Heart left ventricle (tissue), 16 donors: ENCODE measurements at regions of chr6 and their contacts with region 1.

Region 1: GRCh38 chr6:35240840-35241801 is 18.4 kb upstream of the ZNF76 start:
- DNase-seq: peak; percentile 63 to 84 (median 67)
- ATAC-seq: peak; percentile 11 to 41 (median 23)
- H3K4me3 ChIP-seq: no peak overlapping the region
- H3K27ac ChIP-seq: peak overlapping the region in 1 of 12 donors; percentile 19
- H3K4me1 ChIP-seq: peaks cover 0 to 52% (median 24%) of the 10 kb centered on the region in 12 donors
- H3K27me3 ChIP-seq: no peaks in the 10 kb centered on the region
- CTCF ChIP-seq: peak; percentile 93 to 98 (median 94)
- POLR2A ChIP-seq: no peak

Region 2: GRCh38 chr6:34887753-34888513 is 353.2 kb before region 1 on chr6 and contains the start of gene TAF11:
- intact Hi-C with region 1: loop called in 1 of 10 experiments (anchors 10 kb)
- DNase-seq: peak; percentile 94 to 96 (median 95)
- ATAC-seq: peak; percentile 91 to 96 (median 94)
- H3K4me3 ChIP-seq: peak within 1 kb of the TSS; percentile 65 to 95 (median 83)
- H3K27ac ChIP-seq: peak within 1 kb of the TSS; percentile 11 to 93 (median 80)
- H3K4me1 ChIP-seq: peaks cover 0 to 55% (median 24%) of the 10 kb centered on the region in 12 donors
- H3K27me3 ChIP-seq: no peaks in the 10 kb centered on the region
- CTCF ChIP-seq: no peak
- POLR2A ChIP-seq: peak in 1 of 2 donors; percentile 67
- total RNA-seq, gene TAF11: 14.6 to 25.9 (median 19.9) TPM

Region 3: DNA sequence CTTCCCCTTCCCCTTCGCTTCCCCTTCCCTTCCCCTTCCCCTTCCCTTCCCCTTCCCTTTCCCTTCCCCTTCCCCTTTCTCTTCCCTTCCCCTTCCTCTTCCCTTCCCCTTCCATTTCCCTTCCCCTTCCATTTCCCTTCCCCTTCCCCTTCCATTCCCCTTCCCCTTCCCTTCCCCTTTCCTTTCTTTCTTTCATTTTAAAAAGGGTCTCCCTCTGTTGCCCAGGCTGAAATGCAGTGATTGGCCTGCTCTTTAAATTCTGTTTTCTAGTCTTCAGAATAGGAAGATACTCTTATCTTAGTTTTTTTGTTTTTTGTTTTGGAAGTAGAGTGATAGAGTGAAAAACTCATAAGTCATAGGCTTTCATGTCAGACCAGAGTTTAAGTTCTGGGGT is 266.9 kb before region 1 on chr6:
- intact Hi-C with region 1: no loop called
- DNase-seq: no peak
- ATAC-seq: no peak
- H3K4me3 ChIP-seq: no peak overlapping the region
- H3K27ac ChIP-seq: no peak overlapping the region
- H3K4me1 ChIP-seq: peaks cover 0 to 3% (median 0%) of the 10 kb centered on the region in 12 donors
- H3K27me3 ChIP-seq: no peaks in the 10 kb centered on the region
- CTCF ChIP-seq: no peak
- POLR2A ChIP-seq: no peak

Region 4: DNA sequence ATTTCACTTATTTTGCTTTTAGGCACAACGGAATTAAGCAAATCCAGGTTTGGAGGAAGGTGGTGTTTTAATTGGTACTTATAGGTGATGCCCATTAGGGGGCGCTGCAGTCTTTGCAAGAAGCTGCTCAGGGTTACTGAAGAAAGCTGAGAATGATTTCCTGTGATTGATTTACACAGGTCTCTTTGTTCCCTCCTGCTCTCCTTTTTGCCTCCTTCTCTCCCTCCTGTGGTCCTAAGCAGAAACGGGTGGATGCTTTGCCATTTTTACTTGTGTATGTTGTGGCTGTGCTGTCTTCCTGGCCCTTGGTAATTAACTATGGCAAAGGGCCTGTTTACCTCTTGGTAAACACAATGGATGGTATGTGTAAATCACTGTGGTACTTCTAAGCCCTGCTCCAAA is 254.3 kb before region 1 on chr6:
- intact Hi-C with region 1: loop called in 8 of 10 experiments (anchors 5 to 10 kb)
- DNase-seq: peak in 4 of 5 donors; percentile 58 to 78 (median 68)
- ATAC-seq: peak; percentile 56 to 86 (median 83)
- H3K4me3 ChIP-seq: no peak overlapping the region
- H3K27ac ChIP-seq: peak overlapping the region in 2 of 12 donors; percentile 15 to 61
- H3K4me1 ChIP-seq: peaks cover 0 to 12% (median 7%) of the 10 kb centered on the region in 12 donors
- H3K27me3 ChIP-seq: no peaks in the 10 kb centered on the region
- CTCF ChIP-seq: peak; percentile 77 to 96 (median 88)
- POLR2A ChIP-seq: no peak

Region 5: DNA sequence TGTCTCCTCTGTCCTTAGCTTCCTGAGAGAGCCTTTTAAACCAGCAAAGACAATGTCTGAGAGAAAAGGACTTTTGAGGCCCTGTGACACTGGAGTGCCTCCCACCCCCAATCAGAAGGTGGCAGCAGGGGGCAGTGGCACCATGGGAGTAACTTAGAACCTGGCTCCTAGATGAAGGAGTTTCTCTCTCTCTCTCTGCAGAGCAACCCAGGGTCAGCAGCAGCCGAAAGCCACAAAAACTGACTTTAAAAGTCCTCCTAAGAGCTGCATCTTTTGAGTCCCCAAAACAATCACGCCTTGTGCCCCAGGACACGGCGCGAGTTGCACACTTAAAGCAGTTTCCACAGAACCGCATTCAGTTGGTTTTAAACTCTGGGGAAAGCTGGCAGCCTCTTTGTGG is 94.7 kb before region 1 on chr6:
- intact Hi-C with region 1: loop called (anchors 1 to 5 kb)
- DNase-seq: peak in 4 of 5 donors; percentile 25 to 51 (median 45)
- ATAC-seq: peak; percentile 83 to 92 (median 91)
- H3K4me3 ChIP-seq: no peak overlapping the region
- H3K27ac ChIP-seq: no peak overlapping the region
- H3K4me1 ChIP-seq: peaks cover 0 to 11% (median 0%) of the 10 kb centered on the region in 12 donors
- H3K27me3 ChIP-seq: peaks cover 0 to 2% (median 0%) of the 10 kb centered on the region in 9 donors
- CTCF ChIP-seq: peak; percentile 30 to 70 (median 60)
- POLR2A ChIP-seq: no peak

Region 6: GRCh38 chr6:35165630-35166071 is 75.5 kb before region 1 on chr6:
- intact Hi-C with region 1: loop called in 2 of 10 experiments (anchors 5 kb)
- DNase-seq: no peak
- ATAC-seq: no peak
- H3K4me3 ChIP-seq: no peak overlapping the region
- H3K27ac ChIP-seq: no peak overlapping the region
- H3K4me1 ChIP-seq: peaks cover 0 to 29% (median 11%) of the 10 kb centered on the region in 12 donors
- H3K27me3 ChIP-seq: no peaks in the 10 kb centered on the region
- CTCF ChIP-seq: no peak
- POLR2A ChIP-seq: no peak

Region 7: GRCh38 chr6:35209081-35209480 is 32.0 kb before region 1 on chr6:
- intact Hi-C with region 1: loop called in 3 of 10 experiments (anchors 5 kb)
- DNase-seq: no peak
- ATAC-seq: no peak
- H3K4me3 ChIP-seq: no peak overlapping the region
- H3K27ac ChIP-seq: no peak overlapping the region
- H3K4me1 ChIP-seq: peaks cover 0 to 15% (median 4%) of the 10 kb centered on the region in 12 donors
- H3K27me3 ChIP-seq: peaks cover 0 to 31% (median 7%) of the 10 kb centered on the region in 9 donors
- CTCF ChIP-seq: no peak
- POLR2A ChIP-seq: no peak

Region 8: GRCh38 chr6:35218021-35218420 is 23.1 kb before region 1 on chr6:
- intact Hi-C with region 1: loop called in 2 of 10 experiments (anchors 2 kb)
- DNase-seq: no peak
- ATAC-seq: no peak
- H3K4me3 ChIP-seq: no peak overlapping the region
- H3K27ac ChIP-seq: peak overlapping the region in 4 of 12 donors; percentile 2 to 74 (median 27)
- H3K4me1 ChIP-seq: peaks cover 0 to 93% (median 17%) of the 10 kb centered on the region in 12 donors
- H3K27me3 ChIP-seq: peaks cover 0 to 37% (median 13%) of the 10 kb centered on the region in 9 donors
- CTCF ChIP-seq: no peak
- POLR2A ChIP-seq: no peak

Region 9: GRCh38 chr6:35280903-35281302 is 39.8 kb after region 1 on chr6:
- intact Hi-C with region 1: no loop called
- DNase-seq: no peak
- ATAC-seq: peak in 3 of 4 donors; percentile 16 to 25 (median 24)
- H3K4me3 ChIP-seq: no peak overlapping the region
- H3K27ac ChIP-seq: no peak overlapping the region
- H3K4me1 ChIP-seq: peaks cover 0 to 19% (median 6%) of the 10 kb centered on the region in 12 donors
- H3K27me3 ChIP-seq: no peaks in the 10 kb centered on the region
- CTCF ChIP-seq: no peak
- POLR2A ChIP-seq: no peak